ENCODE measurements at regions of chr1 and their contacts with region 1.

Region 1: DNA sequence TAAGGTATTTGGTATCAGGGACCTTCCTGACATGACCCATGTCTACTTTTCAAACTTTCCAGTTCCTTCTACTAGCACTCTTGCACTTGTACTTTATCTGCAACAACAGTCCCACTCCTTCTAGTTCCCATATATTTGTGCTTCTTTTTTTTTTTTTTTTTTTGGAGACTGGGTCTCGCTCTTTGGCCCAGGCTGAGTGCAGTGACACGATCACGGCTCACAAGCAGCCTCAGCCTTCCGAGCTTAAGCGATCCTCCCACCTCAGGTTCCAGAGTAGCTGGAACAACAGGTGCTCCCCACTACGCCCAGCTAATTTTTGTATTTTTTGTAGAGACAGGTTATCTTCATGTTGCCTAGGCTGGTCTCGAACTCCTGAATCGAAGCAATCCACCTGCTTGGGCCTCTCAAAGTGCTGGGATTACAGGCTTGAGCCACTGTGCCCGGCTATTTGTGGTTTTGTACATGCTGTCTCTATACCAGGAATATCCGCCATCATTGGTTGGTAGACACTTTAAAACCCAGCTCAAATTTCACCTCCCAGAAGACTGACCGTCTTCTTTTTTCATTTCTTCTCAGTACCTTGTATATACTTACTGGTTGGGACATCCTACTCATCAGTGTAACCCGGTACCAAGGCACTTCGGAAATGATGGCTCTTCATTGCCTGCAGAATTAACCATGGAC is 1.1 kb downstream of the ZMYM1 start:
- DNase-seq: no peak
- ATAC-seq: no peak

Region 2: DNA sequence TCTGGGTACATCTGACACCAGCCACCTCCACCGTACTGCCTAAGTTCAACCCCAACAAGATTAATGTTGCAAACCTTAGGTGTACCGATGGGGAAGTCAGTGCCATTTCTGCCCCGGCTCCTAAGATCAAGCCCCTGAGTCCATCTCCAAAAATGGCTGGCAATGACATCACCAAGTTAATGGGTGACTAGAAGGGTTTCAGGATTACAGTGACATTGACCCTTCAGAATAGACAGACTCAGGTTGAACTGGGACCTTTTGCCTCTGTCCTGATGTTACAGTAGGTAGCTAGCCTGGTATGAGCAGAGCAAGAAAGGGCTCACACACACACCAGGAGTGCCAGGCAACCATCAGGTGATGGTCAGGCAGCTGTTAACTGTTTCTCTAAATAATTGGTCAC is 26.9 kb before region 1 on chr1:
- intact Hi-C with region 1: loop called (anchors 1 kb)
- DNase-seq: no peak
- ATAC-seq: no peak

Measured in sciatic nerve (tissue), 2 donors.